ENCODE measurements at regions of chr10 and their contacts with region 1.

Region 1: DNA sequence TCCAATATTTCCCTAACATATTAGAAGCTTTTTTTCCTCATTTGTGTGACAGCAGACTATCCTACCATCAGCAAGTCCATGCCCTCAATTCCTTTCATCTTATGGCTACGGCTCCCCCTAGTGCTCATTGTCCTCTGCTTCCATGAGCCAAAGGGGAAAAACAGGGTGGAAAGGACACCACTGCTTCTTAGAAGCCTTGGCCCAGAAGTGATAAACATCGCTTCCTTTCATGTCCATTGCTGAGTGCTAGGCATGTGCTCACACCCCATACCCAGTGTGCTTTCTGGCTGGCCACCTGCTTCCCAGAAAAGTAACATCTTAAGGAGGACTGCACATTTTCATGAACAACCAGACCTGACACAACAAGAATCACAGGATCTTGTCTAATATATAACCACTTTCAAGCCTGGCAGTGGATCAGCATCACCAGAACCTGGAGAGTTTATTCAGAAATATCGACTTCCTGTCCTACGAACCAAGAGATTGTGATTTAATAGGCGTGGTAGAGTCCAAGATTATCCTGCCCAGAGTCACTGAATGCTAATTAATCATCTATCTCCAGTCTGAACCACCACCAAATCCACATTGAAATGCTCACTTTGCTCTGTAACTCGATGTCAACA is 650.5 kb upstream of the SORCS1 start:
- DNase-seq: peak; percentile 76 to 80
- H3K4me3 ChIP-seq: no peak overlapping the region
- H3K4me1 ChIP-seq: peaks cover 6% of the 10 kb centered on the region
- H3K27me3 ChIP-seq: no peaks in the 10 kb centered on the region

Region 2: GRCh38 chr10:107409522-107409921 is 405.5 kb before region 1 on chr10:
- in situ Hi-C with region 1: loop called (anchors 25 kb)
- DNase-seq: peak; percentile 35 to 49
- H3K4me3 ChIP-seq: no peak overlapping the region
- H3K4me1 ChIP-seq: no peaks in the 10 kb centered on the region
- H3K27me3 ChIP-seq: no peaks in the 10 kb centered on the region

Region 3: GRCh38 chr10:108112219-108112618 is 297.2 kb after region 1 on chr10:
- in situ Hi-C with region 1: no loop called
- DNase-seq: no peak
- H3K4me3 ChIP-seq: no peak overlapping the region
- H3K4me1 ChIP-seq: peaks cover 10% of the 10 kb centered on the region
- H3K27me3 ChIP-seq: no peaks in the 10 kb centered on the region